Dendritic cell treated with granulocyte-macrophage colony-stimulating factor and Interleukin-4, amounts not matched to agents 40 ng/mL and 50 ng/mL, for 4 days (primary cell): ENCODE measurements at regions of chr11 and their contacts with region 1.

Region 1: DNA sequence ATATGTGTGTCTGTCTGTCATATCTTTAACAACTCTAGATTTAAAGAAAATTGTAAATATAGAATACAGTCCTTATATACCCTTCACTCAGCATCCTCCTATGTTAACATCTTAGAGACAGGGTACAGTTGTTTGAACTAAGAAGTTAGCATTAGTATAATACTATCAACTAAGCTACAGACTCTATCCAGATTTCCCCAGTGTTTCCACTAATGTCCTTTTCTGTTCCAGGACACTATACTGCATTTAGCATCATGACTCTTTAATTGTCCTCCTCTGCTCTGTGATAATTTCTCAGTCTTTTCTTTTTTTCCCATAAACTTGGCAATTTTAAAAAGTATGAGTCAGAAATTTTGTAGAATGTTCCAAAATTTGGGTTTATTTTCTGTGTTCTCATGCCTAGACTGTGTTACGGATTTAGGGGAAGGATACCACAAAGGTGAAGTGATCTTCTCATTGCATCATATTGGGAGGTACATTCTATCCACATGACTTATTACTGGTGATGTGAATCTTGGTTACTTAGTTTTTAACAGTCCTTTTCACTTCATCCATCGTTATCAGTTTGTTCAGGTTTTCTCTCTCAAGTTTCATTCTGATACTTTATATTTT is 168.4 kb downstream of the SBF2 start:
- H3K4me3 Mint-ChIP-seq: no peak overlapping the region
- H3K27ac Mint-ChIP-seq: no peak overlapping the region
- H3K4me1 Mint-ChIP-seq: peaks cover 21% of the 10 kb centered on the region
- H3K27me3 Mint-ChIP-seq: no peaks in the 10 kb centered on the region

Region 2: GRCh38 chr11:10087186-10087585 is 38.4 kb before region 1 on chr11:
- intact Hi-C with region 1: loop called (anchors 1 kb)
- H3K4me3 Mint-ChIP-seq: no peak overlapping the region
- H3K27ac Mint-ChIP-seq: no peak overlapping the region
- H3K4me1 Mint-ChIP-seq: peaks cover 8% of the 10 kb centered on the region
- H3K27me3 Mint-ChIP-seq: no peaks in the 10 kb centered on the region